CD4-positive, alpha-beta memory T cell (primary cell): ENCODE measurements at regions of chr19 and their contacts with region 1.

Region 1: GRCh38 chr19:49468746-49469447 is 5.1 kb upstream of the FLT3LG start:
- DNase-seq: peak; percentile 96 to 99 (median 98)
- H3K4me3 ChIP-seq: peak overlapping the region in 1 of 2 donors; percentile 44
- H3K4me3 Mint-ChIP-seq: peak overlapping the region; percentile 67 to 94 (median 80)
- H3K27ac ChIP-seq: peak overlapping the region; percentile 84
- H3K27ac Mint-ChIP-seq: peak overlapping the region; percentile 94 to 100 (median 100)
- H3K4me1 ChIP-seq: peaks cover 71% of the 10 kb centered on the region
- H3K4me1 Mint-ChIP-seq: peaks cover 24 to 61% (median 40%) of the 10 kb centered on the region in 4 donors
- H3K27me3 ChIP-seq: no peaks in the 10 kb centered on the region
- H3K27me3 Mint-ChIP-seq: no peaks in the 10 kb centered on the region

Region 2: GRCh38 chr19:49391581-49392399 is 77.1 kb before region 1 on chr19:
- CTCF ChIA-PET with region 1: interaction called, 57 read pairs
- POLR2A ChIA-PET with region 1: interaction called, 20 read pairs
- intact Hi-C with region 1: no loop called
- DNase-seq: peak; percentile 76 to 80 (median 78)
- H3K4me3 ChIP-seq: no peak overlapping the region
- H3K4me3 Mint-ChIP-seq: no peak overlapping the region
- H3K27ac ChIP-seq: no peak overlapping the region
- H3K27ac Mint-ChIP-seq: peak overlapping the region in 6 of 7 donors; percentile 9 to 85 (median 60)
- H3K4me1 ChIP-seq: peaks cover 21% of the 10 kb centered on the region
- H3K4me1 Mint-ChIP-seq: peaks cover 8 to 24% (median 11%) of the 10 kb centered on the region in 4 donors
- H3K27me3 ChIP-seq: no peaks in the 10 kb centered on the region
- H3K27me3 Mint-ChIP-seq: no peaks in the 10 kb centered on the region

Region 3: GRCh38 chr19:49451430-49452181 is 17.3 kb before region 1 on chr19 and contains the start of gene PIH1D1:
- CTCF ChIA-PET with region 1: interaction called, 227 read pairs
- POLR2A ChIA-PET with region 1: interaction called, 222 read pairs
- intact Hi-C with region 1: loop called (anchors 1 kb)
- DNase-seq: peak; percentile 91 to 98 (median 95)
- H3K4me3 ChIP-seq: peak within 1 kb of the TSS; percentile 66 to 90
- H3K4me3 Mint-ChIP-seq: peak within 1 kb of the TSS; percentile 91 to 100 (median 99)
- H3K27ac ChIP-seq: peak within 1 kb of the TSS; percentile 91
- H3K27ac Mint-ChIP-seq: peak within 1 kb of the TSS; percentile 96 to 100 (median 100)
- H3K4me1 ChIP-seq: peaks cover 37% of the 10 kb centered on the region
- H3K4me1 Mint-ChIP-seq: peaks cover 25 to 70% (median 41%) of the 10 kb centered on the region in 4 donors
- H3K27me3 ChIP-seq: no peaks in the 10 kb centered on the region
- H3K27me3 Mint-ChIP-seq: no peaks in the 10 kb centered on the region
- total RNA-seq, gene PIH1D1: 178 to 186 TPM

Region 4: DNA sequence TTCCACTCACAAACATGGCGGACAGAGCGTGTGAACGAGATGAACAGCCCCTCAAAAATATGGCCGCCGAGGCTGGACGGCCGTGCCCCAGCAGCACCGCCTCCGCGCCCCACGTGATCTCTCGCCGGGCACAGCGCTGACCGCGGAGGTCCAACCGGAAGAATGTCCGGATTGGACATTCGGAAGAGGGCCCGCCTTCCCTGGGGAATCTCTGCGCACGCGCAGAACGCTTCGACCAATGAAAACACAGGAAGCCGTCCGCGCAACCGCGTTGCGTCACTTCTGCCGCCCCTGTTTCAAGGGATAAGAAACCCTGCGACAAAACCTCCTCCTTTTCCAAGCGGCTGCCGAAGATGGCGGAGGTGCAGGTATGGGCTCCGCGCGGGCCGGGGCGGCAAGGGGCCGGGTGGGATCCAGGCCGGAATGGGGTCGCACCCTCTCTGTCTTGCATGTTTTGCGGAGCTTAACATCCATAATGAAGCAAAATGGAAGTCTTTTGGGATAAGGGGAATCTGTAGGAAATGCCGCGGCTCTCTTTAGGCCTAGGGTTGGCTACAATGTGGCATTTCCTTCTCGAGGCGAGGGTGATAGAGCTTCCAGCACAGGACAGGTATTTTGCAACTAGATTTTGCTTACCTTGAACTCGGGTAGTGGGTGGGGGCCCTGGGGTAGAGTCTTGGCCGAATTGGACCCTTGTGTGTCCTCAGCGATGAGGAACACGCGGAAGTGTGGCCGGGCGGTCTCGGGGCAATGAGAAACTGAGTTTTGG is 18.6 kb after region 1 on chr19 and contains the start of gene RPL13A:
- CTCF ChIA-PET with region 1: interaction called, 13 read pairs
- POLR2A ChIA-PET with region 1: interaction called, 22 read pairs
- intact Hi-C with region 1: loop called (anchors 1 kb)
- DNase-seq: peak; percentile 98 to 100 (median 100)
- H3K4me3 ChIP-seq: peak within 1 kb of the TSS; percentile 98 to 99
- H3K4me3 Mint-ChIP-seq: peak within 1 kb of the TSS; percentile 94 to 100 (median 98)
- H3K27ac ChIP-seq: peak within 1 kb of the TSS; percentile 85
- H3K27ac Mint-ChIP-seq: peak within 1 kb of the TSS; percentile 95 to 98 (median 98)
- H3K4me1 ChIP-seq: peaks cover 39% of the 10 kb centered on the region
- H3K4me1 Mint-ChIP-seq: peaks cover 18 to 55% (median 36%) of the 10 kb centered on the region in 4 donors
- H3K27me3 ChIP-seq: no peaks in the 10 kb centered on the region
- H3K27me3 Mint-ChIP-seq: no peaks in the 10 kb centered on the region
- total RNA-seq, gene RPL13A: 5,517 to 5,661 TPM